GM12878 (cell line): ENCODE measurements at regions of chr12 and their contacts with region 1.

Region 1: GRCh38 chr12:57583008-57583831 is 7.8 kb upstream of the PIP4K2C start:
- DNase-seq: peak; percentile 31
- ATAC-seq: peak; percentile 100
- H3K4me3 ChIP-seq: no peak overlapping the region
- H3K27ac ChIP-seq: no peak overlapping the region
- H3K4me1 ChIP-seq: no peaks in the 10 kb centered on the region
- H3K27me3 ChIP-seq: no peaks in the 10 kb centered on the region; a peak in 1 of 4 replicates
- CTCF ChIP-seq: peak; percentile 91 to 98 (median 97)
- EP300 ChIP-seq: no peak
- POLR2A ChIP-seq: no peak
- RAD21 ChIP-seq: peak; percentile 89

Region 2: DNA sequence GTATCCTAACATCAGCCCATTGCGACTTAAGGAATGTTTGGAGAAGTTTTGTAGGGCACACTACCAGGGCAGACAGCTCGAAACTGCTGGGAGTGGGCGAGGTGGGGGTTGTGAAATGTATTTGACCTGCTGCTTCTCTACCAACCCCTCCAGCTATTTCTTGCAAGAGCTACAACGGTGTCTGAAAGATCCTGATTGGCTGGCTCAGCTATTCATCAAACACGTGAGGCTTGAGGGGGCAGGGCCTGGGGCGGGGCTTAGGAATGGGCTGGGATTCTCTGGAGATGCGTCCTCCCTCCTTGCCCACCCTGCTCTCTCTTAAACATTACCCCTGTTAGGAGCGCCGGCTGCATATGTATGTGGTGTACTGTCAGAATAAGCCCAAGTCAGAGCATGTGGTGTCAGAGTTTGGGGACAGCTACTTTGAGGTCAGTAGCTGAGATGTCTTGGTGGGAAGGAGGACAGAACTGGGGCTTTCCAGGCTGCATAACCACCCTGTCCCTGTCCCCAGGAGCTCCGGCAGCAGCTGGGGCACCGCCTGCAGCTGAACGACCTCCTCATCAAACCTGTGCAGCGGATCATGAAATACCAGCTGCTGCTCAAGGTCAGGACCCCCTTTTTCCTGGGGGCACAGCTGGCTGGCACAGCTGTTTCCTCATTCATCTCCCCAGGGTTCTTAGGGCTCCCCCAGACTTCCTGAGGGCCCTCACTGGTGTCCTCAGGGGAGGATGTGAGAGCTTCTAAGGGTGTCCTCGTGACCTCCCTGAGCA is 31.1 kb after region 1 on chr12:
- CTCF ChIA-PET with region 1: interaction called, 119 read pairs
- POLR2A ChIA-PET with region 1: interaction called, 3 read pairs
- RAD21 ChIA-PET with region 1: interaction called, 28 read pairs
- SMC1A ChIA-PET with region 1: interaction called, 5 read pairs
- in situ Hi-C with region 1: no loop called
- intact Hi-C with region 1: no loop called
- DNase-seq: peak; percentile 33
- ATAC-seq: peak; percentile 76
- H3K4me3 ChIP-seq: no peak overlapping the region
- H3K27ac ChIP-seq: no peak overlapping the region; the same call in 1 of the 2 replicates
- H3K4me1 ChIP-seq: peaks cover 10% of the 10 kb centered on the region
- H3K27me3 ChIP-seq: peaks cover under 1 to 4% of the 10 kb centered on the region in 2 experiments; a peak in 2 of 4 replicates
- CTCF ChIP-seq: no peak
- EP300 ChIP-seq: no peak
- POLR2A ChIP-seq: no peak
- RAD21 ChIP-seq: no peak

Region 3: DNA sequence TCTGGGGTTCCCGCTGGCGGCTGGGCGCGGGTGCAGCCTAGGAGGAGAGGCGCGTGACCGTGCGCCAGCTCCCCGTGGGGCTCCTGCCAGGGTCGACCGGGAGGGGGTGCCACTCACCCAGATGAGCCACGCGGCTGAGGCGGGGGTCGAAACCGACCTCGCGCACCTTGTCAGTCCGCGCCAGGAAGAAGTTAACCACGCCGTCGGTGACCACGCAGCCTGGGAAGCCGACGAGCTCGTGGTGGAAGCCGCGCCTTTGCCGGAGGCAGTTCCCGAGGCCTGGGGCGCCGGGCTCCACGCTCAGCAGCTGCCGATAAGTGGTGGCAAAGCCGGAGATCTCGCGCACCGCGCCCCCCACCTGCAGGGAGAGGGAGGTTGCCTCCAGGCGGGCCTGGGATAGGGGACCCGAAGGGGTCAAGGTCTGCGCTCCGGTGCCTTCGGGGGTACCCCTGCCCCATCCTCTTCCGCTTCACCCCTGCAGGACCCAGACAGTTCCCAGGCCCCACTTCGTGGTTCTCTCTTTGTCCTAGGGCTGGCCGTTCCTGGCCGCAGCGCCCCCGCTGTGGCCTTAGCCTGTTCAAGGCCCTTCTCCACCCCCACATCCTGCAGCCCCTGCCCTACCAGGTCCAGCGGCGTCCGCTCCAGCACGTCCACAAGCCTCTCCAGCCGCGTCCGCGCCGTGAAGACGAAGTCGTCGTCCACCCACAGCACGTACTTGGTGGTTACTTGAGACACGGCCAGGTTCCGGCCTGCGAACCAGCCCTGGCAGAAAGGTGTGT is 44.5 kb after region 1 on chr12:
- CTCF ChIA-PET with region 1: interaction called, 119 read pairs
- POLR2A ChIA-PET with region 1: no interaction called
- RAD21 ChIA-PET with region 1: interaction called, 12 read pairs
- SMC1A ChIA-PET with region 1: interaction called, 16 read pairs
- in situ Hi-C with region 1: no loop called
- intact Hi-C with region 1: no loop called
- DNase-seq: no peak
- ATAC-seq: peak; percentile 38
- H3K4me3 ChIP-seq: no peak overlapping the region
- H3K27ac ChIP-seq: no peak overlapping the region
- H3K4me1 ChIP-seq: no peaks in the 10 kb centered on the region
- H3K27me3 ChIP-seq: peaks cover 26% of the 10 kb centered on the region in 2 experiments
- CTCF ChIP-seq: peak in 1 of 3 experiments; percentile 20; a peak in 2 of 6 replicates
- EP300 ChIP-seq: no peak
- POLR2A ChIP-seq: no peak
- RAD21 ChIP-seq: no peak

Region 4: GRCh38 chr12:57744777-57745484 is 161.7 kb after region 1 on chr12 and contains the start of gene TSPAN31:
- CTCF ChIA-PET with region 1: interaction called, 22 read pairs
- POLR2A ChIA-PET with region 1: no interaction called
- RAD21 ChIA-PET with region 1: interaction called, 6 read pairs
- SMC1A ChIA-PET with region 1: interaction called, 16 read pairs
- in situ Hi-C with region 1: no loop called
- intact Hi-C with region 1: loop called (anchors 1 kb)
- DNase-seq: peak; percentile 92
- ATAC-seq: peak; percentile 87
- H3K4me3 ChIP-seq: peak within 1 kb of the TSS; percentile 91
- H3K27ac ChIP-seq: peak within 1 kb of the TSS; percentile 94
- H3K4me1 ChIP-seq: peaks cover 22% of the 10 kb centered on the region
- H3K27me3 ChIP-seq: no peaks in the 10 kb centered on the region
- CTCF ChIP-seq: no peak
- EP300 ChIP-seq: no peak
- POLR2A ChIP-seq: peak; percentile 72
- RAD21 ChIP-seq: no peak
- polyA plus RNA-seq, gene TSPAN31: 23.4 to 25.1 TPM